ENCODE measurements at regions of chr12 and their contacts with region 1.

Region 1: GRCh38 chr12:49288412-49288853 is 6.5 kb upstream of the PRPH start:
- DNase-seq: peak in 4 of 5 donors; percentile 55 to 64 (median 60)
- H3K4me3 ChIP-seq: no peak overlapping the region
- H3K27ac ChIP-seq: no peak overlapping the region
- H3K4me1 ChIP-seq: no peaks in the 10 kb centered on the region
- H3K27me3 ChIP-seq: no peaks in the 10 kb centered on the region
- CTCF ChIP-seq: peak; percentile 65 to 67 (median 66)
- EP300 ChIP-seq: no peak
- POLR2A ChIP-seq: no peak

Region 2: GRCh38 chr12:49527361-49528130 is 239.1 kb after region 1 on chr12:
- intact Hi-C with region 1: loop called in 1 of 4 experiments (anchors 10 kb)
- DNase-seq: no peak
- H3K4me3 ChIP-seq: no peak overlapping the region
- H3K27ac ChIP-seq: no peak overlapping the region
- H3K4me1 ChIP-seq: no peaks in the 10 kb centered on the region
- H3K27me3 ChIP-seq: no peaks in the 10 kb centered on the region
- CTCF ChIP-seq: no peak
- EP300 ChIP-seq: no peak
- POLR2A ChIP-seq: no peak